ENCODE measurements at regions of chr4 and their contacts with region 1.

Region 1: GRCh38 chr4:153432968-153433753 is 33.0 kb upstream of the TMEM131L start:
- DNase-seq: peak; percentile 95
- H3K4me3 Mint-ChIP-seq: peak overlapping the region; percentile 57
- H3K27ac Mint-ChIP-seq: peak overlapping the region; percentile 72
- H3K4me1 Mint-ChIP-seq: peaks cover 7% of the 10 kb centered on the region
- H3K27me3 Mint-ChIP-seq: no peaks in the 10 kb centered on the region
- CTCF ChIP-seq: peak; percentile 53

Region 2: GRCh38 chr4:153448003-153448731 is 15.0 kb after region 1 on chr4:
- CTCF ChIA-PET with region 1: interaction called, 11 read pairs
- POLR2A ChIA-PET with region 1: interaction called, 4 read pairs
- intact Hi-C with region 1: no loop called
- DNase-seq: peak; percentile 31
- H3K4me3 Mint-ChIP-seq: no peak overlapping the region
- H3K27ac Mint-ChIP-seq: no peak overlapping the region
- H3K4me1 Mint-ChIP-seq: peaks cover 7% of the 10 kb centered on the region
- H3K27me3 Mint-ChIP-seq: no peaks in the 10 kb centered on the region
- CTCF ChIP-seq: no peak